ENCODE measurements at regions of chr9 and their contacts with region 1.

Region 1: DNA sequence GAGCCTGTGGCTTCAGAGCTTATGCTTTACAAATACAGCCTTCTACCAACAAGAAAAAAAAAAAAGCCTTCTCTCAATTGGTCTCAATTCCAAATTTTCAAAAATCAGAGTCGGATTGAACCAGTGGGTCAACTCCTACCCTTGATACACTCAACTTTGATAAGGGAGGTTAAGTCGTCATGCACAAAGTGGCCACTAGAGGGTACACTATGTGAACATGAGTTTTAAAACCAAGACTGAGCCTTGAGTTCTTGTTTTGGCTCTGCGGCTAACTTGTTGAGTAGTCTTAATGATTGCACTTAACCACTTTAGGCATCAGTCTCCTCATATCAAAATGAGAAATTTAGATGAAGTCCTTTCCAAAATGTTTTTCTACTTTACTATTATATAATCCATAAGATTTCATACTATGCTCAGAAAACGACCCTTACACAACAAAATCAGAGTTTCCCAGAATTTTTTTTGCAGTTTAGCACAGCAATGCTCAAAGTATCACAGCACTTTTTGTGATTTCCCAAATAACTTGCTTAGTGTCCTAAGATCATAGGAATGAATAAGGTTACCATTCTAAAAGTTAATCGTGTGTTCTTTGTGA is 92.9 kb upstream of the MTAP start:
- DNase-seq: no peak
- H3K4me3 ChIP-seq: no peak overlapping the region
- CTCF ChIP-seq: peak; percentile 60

Region 2: DNA sequence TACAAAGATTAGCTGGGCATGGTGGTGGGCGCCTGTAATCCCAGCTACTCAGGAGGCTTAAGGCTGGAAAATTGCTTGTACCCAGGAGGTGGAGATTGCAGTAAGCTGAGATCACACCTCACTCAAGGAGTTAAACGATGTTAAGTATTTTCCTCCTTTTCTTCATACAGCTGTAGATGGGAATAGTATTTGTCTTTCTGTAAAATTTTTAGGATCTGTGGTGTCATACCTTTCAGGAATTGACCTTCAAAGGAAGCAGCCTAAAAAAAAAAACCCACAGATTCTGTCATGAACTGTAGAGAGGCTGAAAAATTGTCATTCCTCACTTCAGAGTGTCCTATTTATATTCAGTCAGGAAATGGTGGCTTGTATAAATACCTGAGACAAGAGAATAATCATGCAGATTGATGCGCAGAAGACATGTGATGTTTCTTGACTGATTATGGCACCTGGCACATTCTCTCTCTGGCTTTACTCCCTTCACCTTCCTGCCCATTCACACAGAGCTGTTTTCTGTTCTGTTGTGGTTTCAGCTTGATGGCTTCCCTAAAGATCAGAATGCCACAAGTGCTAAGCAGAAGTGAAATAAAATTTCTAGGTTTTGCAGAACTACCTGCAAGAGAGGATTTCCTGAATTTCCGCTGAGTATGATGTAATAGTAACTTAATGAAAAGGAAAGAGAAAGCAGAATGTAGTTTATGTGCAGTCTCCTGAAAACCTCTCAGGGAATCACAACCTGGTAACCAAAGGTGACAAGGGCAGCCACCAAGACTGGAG is 265.5 kb before region 1 on chr9:
- CTCF ChIA-PET with region 1: no interaction called
- POLR2A ChIA-PET with region 1: no interaction called
- DNase-seq: no peak
- H3K4me3 ChIP-seq: no peak overlapping the region
- CTCF ChIP-seq: no peak

Region 3: GRCh38 chr9:21681641-21682040 is 27.9 kb before region 1 on chr9:
- CTCF ChIA-PET with region 1: interaction called, 12 read pairs
- POLR2A ChIA-PET with region 1: no interaction called
- DNase-seq: peak; percentile 79
- H3K4me3 ChIP-seq: no peak overlapping the region
- CTCF ChIP-seq: no peak

Region 4: DNA sequence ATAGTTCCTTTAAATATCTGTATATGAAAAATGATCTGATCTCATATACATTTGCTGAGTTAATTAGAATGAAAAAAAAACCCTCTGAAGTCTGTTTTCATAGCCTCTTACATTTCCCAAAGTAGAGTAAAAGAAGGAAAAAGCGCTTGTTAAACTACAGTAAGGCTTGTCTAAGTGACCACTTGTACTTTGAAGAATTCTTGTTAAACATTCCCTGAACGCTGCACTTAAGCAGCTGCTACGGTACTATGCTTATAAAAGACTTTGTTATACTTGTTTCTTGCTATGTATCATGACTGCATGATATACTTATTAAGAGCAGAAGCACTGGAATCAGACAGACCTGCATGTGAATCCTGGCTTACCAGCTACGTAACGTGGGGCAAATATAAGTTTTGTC is 11.2 kb after region 1 on chr9:
- CTCF ChIA-PET with region 1: interaction called, 26 read pairs
- POLR2A ChIA-PET with region 1: no interaction called
- DNase-seq: no peak
- H3K4me3 ChIP-seq: no peak overlapping the region
- CTCF ChIP-seq: no peak

Region 5: DNA sequence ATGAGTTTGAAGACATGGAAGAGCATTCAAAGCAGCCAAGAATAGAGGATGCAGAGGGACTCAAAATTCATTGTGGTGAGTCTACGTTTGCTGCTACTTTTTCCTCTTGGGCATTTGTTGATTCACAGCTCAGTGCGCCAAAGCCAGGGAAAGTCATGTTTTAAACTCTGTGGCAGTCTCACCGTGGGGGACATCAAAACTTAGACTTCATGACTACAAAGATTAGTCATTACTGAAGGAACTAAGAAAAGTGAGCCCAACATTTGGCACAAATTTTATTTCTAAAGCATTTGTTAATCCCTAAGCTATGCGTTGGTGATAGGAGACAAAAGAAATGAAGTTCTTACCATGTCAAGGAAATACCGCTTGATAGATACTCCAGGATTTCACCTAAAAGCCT is 19.2 kb after region 1 on chr9:
- CTCF ChIA-PET with region 1: interaction called, 14 read pairs
- POLR2A ChIA-PET with region 1: no interaction called
- DNase-seq: no peak
- H3K4me3 ChIP-seq: no peak overlapping the region
- CTCF ChIP-seq: no peak

Region 6: GRCh38 chr9:21741151-21741550 is 31.6 kb after region 1 on chr9:
- CTCF ChIA-PET with region 1: interaction called, 14 read pairs
- POLR2A ChIA-PET with region 1: no interaction called
- DNase-seq: no peak
- H3K4me3 ChIP-seq: no peak overlapping the region
- CTCF ChIP-seq: no peak

Measured in AG04449 (cell line).